ENCODE measurements at regions of chr2 and their contacts with region 1.

Region 1: DNA sequence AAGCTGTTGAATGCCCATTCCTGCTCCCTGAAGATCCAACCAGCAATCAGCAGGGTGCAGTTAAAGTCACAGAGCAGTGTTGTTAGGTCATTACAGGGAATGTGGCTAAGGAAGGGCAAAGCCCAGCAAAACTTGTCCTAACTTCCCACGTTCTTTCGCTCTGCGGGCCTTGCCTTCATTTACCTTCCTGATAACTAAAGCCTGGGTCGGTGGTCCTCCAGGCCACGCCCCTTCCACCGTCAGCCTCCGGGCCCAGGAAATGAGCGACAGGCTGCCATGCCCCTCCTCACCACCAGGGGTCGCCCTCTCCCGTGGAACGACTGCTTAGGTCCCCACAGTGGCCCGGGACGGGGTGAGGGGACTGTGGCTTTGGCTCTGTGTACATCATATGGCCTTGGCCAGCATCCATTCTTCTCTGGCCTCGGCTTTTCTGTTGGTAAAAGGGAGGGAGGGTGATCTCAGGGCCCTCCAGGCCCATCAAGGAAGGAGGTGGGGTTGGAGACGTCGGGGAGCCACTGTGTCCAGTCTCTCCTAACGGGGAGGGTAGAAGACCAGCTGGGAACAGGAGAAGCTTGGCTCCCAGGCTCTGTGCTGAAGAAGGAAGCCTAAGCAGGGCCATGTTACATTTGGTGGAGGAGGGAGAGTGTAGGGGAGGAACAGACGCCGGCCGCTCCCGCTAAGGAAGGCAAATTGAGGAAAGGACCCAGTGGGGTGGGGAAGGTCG is 2.2 kb downstream of the SH2D6 start:
- DNase-seq: peak; percentile 88 to 95 (median 91)
- ATAC-seq: peak; percentile 74 to 83 (median 80)
- H3K4me3 ChIP-seq: peak overlapping the region in 2 of 3 donors; percentile 8 to 19
- H3K27ac ChIP-seq: peak overlapping the region; percentile 75 to 90 (median 78)
- H3K4me1 ChIP-seq: peaks cover 4 to 58% (median 32%) of the 10 kb centered on the region in 4 donors
- H3K27me3 ChIP-seq: no peaks in the 10 kb centered on the region
- CTCF ChIP-seq: peak; percentile 99 to 100 (median 100)
- POLR2A ChIP-seq: no peak

Region 2: DNA sequence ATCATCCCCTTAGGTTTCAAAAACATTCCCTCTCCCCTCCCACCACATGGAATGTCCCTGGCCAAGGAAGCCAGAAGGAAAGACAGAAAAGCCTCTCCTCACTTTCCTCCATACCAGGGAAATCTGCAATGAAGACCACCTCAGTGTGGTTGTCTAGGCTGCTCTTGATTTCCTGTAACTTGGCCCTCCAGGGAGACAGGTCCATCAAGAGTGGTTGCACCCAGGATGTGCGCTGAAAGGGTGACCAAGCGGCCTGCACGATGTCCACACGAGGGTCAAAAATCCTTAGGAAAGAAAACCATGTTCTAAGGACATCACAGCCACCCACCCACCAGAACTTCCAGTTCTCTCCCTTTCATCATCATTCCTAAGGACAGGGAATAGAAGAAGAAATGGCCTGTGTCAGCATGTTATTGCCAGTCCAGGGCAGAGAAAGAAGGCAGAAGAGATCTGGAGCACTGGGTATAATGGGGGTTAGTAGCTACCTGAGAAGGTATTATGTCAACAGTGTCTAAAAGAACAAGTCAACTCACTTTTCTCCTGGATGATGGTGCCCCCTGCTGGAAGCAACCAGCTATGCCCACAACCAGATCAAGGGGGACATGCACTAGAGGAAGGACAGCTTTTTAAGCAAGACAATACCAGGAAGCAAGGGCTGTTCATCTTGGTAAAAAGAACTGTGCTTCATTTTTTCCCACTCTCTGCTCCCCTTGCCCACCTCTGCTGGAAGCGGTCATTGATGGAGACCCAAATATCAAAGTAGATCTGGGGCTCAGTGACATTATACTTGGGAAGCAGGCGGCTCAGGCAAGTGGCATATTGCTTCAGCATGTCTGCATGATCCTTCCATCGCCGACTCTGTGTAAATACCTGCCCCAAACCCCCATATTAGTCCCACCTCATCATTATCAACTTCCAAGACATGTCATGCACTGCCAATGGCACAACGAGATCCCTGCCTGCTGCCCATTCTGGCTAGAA is 131.3 kb after region 1 on chr2:
- intact Hi-C with region 1: loop called (anchors 5 kb)
- DNase-seq: peak; percentile 73 to 83 (median 75)
- ATAC-seq: peak; percentile 82 to 88 (median 84)
- H3K4me3 ChIP-seq: no peak overlapping the region
- H3K27ac ChIP-seq: no peak overlapping the region
- H3K4me1 ChIP-seq: no peaks in the 10 kb centered on the region
- H3K27me3 ChIP-seq: no peaks in the 10 kb centered on the region
- CTCF ChIP-seq: peak; percentile 94 to 95 (median 95)
- POLR2A ChIP-seq: no peak